Common myeloid progenitor, CD34-positive (primary cell): ENCODE measurements at regions of chr3 and their contacts with region 1.

Region 1: GRCh38 chr3:124928333-124929202 is 6.0 kb downstream of the MUC13 start:
- DNase-seq: peak; percentile 53 to 81 (median 75)
- H3K4me3 ChIP-seq: no peak overlapping the region
- H3K27ac ChIP-seq: no peak overlapping the region
- H3K4me1 ChIP-seq: no peaks in the 10 kb centered on the region
- H3K27me3 ChIP-seq: peaks cover 0 to 2% (median 0%) of the 10 kb centered on the region in 5 experiments

Region 2: GRCh38 chr3:124916837-124917409 is 11.6 kb before region 1 on chr3:
- CTCF ChIA-PET with region 1: interaction called, 11 read pairs
- POLR2A ChIA-PET with region 1: no interaction called
- DNase-seq: no peak
- H3K4me3 ChIP-seq: no peak overlapping the region
- H3K27ac ChIP-seq: no peak overlapping the region
- H3K4me1 ChIP-seq: no peaks in the 10 kb centered on the region
- H3K27me3 ChIP-seq: peaks cover 0 to 1% (median 0%) of the 10 kb centered on the region in 5 experiments